Activated naive CD4-positive, alpha-beta T cell treated with anti-CD3 and anti-CD28 coated beads for 36 hours (primary cell): ENCODE measurements at regions of chr17 and their contacts with region 1.

Region 1: GRCh38 chr17:57861000-57861789 is 11.4 kb upstream of the MRPS23 start:
- DNase-seq: peak; percentile 51
- H3K4me3 Mint-ChIP-seq: peak overlapping the region; percentile 65
- H3K27ac Mint-ChIP-seq: no peak overlapping the region
- H3K4me1 Mint-ChIP-seq: peaks cover 8% of the 10 kb centered on the region
- H3K27me3 Mint-ChIP-seq: peaks cover 7% of the 10 kb centered on the region

Region 2: DNA sequence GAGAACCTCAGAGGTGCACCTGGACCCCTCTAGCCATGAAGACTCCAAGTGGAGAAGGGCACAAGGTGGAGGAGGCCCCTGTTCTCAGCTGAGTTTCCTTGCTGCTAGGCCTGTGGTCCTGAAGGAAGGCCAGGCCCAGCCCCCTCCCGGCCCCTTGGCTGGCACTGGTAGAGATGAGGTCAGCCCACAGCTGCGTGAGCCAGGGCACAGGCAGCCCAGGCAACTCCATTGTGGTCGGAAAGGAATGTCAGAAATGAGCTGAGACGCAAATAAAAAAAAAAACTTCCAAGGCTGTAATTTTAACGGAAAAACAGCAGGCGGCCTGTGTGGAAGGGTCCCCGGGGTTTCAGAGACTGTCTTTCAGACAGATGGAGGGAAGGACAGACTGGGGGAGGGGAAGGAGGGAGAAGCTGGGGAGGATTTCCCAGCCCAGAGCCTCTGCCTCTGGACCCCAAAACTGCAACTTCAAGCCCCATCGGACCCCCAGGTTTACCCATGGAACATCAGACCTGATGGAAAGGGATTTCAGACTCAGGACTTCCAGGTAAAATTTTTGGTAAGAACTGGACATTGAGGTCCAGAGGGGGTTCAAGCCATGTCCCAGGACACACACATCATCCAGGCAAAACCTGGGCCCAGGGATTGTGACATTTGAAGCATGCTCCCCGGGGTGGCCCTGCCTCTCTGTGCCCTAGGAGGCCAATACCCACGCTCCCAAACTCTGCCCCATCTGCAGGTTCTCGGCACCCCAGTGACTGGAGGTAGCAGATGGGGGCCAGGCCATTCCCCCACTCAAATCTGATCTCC is 14.3 kb after region 1 on chr17:
- CTCF ChIA-PET with region 1: interaction called, 44 read pairs
- intact Hi-C with region 1: no loop called
- DNase-seq: no peak
- H3K4me3 Mint-ChIP-seq: no peak overlapping the region
- H3K27ac Mint-ChIP-seq: no peak overlapping the region
- H3K4me1 Mint-ChIP-seq: peaks cover 30% of the 10 kb centered on the region
- H3K27me3 Mint-ChIP-seq: peaks cover 5% of the 10 kb centered on the region

Region 3: DNA sequence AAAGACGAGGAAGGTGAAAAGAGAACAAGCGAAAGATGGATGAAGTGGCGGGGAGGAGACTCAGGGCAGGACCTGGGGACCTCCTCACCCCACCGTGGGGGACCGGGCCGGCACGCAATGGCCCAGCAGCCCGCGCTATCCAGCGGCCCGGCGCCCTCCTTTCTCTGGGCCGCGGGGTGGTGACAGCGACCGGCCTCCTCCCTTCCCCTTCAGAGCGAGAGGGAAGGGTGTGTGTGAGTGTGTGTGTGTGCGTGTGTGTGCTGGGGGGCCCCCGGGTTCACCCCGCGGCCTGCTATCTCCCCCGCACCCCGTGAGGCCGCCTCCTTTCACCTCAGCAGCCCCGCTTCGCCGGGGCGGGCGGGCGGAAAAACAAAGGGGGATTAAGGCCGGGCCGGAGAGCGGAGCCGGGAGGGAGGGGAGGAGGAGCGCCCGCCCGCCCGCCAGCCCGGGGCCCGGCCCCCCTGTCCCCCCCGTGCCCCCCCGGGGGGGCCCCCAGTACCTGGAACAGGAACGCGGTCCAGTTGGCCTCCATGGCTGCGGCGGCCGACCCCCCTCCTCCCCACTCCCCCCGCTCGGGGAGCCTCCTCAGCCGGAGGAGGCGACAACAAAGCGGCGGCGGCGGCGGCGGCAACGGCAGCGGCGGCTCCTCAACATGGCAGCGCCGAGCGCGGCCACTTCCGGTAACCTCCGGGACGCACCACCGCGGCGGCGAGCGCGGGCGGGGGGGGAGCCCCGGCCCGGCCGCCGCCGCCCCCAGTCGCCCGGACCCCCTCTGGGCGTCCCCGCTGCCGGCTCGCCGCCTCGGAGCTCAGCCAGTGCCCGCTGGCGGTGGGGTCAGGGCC is 126.6 kb after region 1 on chr17 and contains the start of gene VEZF1:
- CTCF ChIA-PET with region 1: interaction called, 43 read pairs
- intact Hi-C with region 1: no loop called
- DNase-seq: peak; percentile 75
- H3K4me3 Mint-ChIP-seq: peak within 1 kb of the TSS; percentile 90
- H3K27ac Mint-ChIP-seq: peak within 1 kb of the TSS; percentile 89
- H3K4me1 Mint-ChIP-seq: peaks cover 57% of the 10 kb centered on the region
- H3K27me3 Mint-ChIP-seq: no peaks in the 10 kb centered on the region
- total RNA-seq, gene VEZF1: 21.7 to 22.0 TPM

Region 4: GRCh38 chr17:58079300-58080097 is 218.3 kb after region 1 on chr17:
- CTCF ChIA-PET with region 1: no interaction called
- intact Hi-C with region 1: no loop called
- DNase-seq: no peak
- H3K4me3 Mint-ChIP-seq: no peak overlapping the region
- H3K27ac Mint-ChIP-seq: no peak overlapping the region
- H3K4me1 Mint-ChIP-seq: peaks cover 4% of the 10 kb centered on the region
- H3K27me3 Mint-ChIP-seq: no peaks in the 10 kb centered on the region

Region 5: GRCh38 chr17:58112970-58113631 is 251.9 kb after region 1 on chr17:
- CTCF ChIA-PET with region 1: interaction called, 46 read pairs
- intact Hi-C with region 1: loop called (anchors 1 kb)
- DNase-seq: peak; percentile 94
- H3K4me3 Mint-ChIP-seq: no peak overlapping the region
- H3K27ac Mint-ChIP-seq: no peak overlapping the region
- H3K4me1 Mint-ChIP-seq: no peaks in the 10 kb centered on the region
- H3K27me3 Mint-ChIP-seq: no peaks in the 10 kb centered on the region